ENCODE measurements at regions of chr10 and their contacts with region 1.

Region 1: GRCh38 chr10:51368939-51369338 is 294.7 kb downstream of the PRKG1 start:
- DNase-seq: no peak
- ATAC-seq: no peak
- H3K4me3 ChIP-seq: no peak overlapping the region
- H3K27ac ChIP-seq: no peak overlapping the region
- H3K4me1 ChIP-seq: peaks cover 0 to 43% (median 11%) of the 10 kb centered on the region in 12 donors
- H3K27me3 ChIP-seq: no peaks in the 10 kb centered on the region
- CTCF ChIP-seq: peak in 1 of 12 donors; percentile 7
- POLR2A ChIP-seq: no peak

Region 2: DNA sequence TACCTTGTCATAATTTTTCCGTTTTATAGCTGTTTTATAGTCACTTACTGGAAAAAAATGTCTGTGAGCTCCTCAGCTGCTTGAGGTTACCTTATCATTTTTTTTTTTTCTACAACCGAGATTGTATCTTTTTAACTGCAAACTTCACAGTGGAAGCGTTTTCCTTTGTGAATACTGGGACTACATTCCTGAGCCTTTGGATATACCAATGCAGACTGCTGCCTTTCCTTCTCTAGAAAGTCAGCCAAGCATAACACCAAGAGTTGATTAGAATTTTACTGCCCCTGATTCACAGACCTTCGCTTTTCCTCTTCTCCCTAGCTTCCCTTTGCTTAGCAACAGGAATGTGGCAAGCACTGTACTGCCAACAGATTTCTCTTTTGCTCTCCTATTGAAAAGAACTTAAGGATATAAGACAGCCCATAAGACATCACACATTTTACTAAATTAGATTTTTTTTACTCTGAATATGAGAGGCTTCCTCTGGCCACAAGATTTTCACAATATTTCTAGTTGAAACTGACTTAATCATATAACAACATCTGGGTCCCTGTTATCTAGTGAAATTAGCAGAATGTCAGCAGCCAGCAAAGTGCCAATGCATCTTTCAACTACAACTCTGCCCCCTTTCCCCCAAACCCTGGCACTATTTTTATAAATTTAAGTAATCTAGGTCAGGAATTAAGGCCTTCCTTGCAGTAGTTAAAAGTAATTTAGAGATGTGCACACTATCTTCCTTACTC is 124.0 kb before region 1 on chr10:
- intact Hi-C with region 1: loop called in 1 of 10 experiments (anchors 10 kb)
- DNase-seq: no peak
- ATAC-seq: peak; percentile 55 to 87 (median 84)
- H3K4me3 ChIP-seq: peak overlapping the region in 6 of 12 donors; percentile 1 to 25 (median 10)
- H3K27ac ChIP-seq: peak overlapping the region; percentile 7 to 79 (median 54)
- H3K4me1 ChIP-seq: peaks cover 0 to 59% (median 16%) of the 10 kb centered on the region in 12 donors
- H3K27me3 ChIP-seq: no peaks in the 10 kb centered on the region
- CTCF ChIP-seq: no peak
- POLR2A ChIP-seq: no peak

Region 3: GRCh38 chr10:51405580-51406351 is 36.8 kb after region 1 on chr10:
- intact Hi-C with region 1: no loop called
- DNase-seq: no peak
- ATAC-seq: peak; percentile 45 to 84 (median 62)
- H3K4me3 ChIP-seq: no peak overlapping the region
- H3K27ac ChIP-seq: peak overlapping the region in 11 of 12 donors; percentile 13 to 60 (median 38)
- H3K4me1 ChIP-seq: peaks cover 0 to 41% (median 26%) of the 10 kb centered on the region in 12 donors
- H3K27me3 ChIP-seq: no peaks in the 10 kb centered on the region
- CTCF ChIP-seq: no peak
- POLR2A ChIP-seq: no peak

Region 4: DNA sequence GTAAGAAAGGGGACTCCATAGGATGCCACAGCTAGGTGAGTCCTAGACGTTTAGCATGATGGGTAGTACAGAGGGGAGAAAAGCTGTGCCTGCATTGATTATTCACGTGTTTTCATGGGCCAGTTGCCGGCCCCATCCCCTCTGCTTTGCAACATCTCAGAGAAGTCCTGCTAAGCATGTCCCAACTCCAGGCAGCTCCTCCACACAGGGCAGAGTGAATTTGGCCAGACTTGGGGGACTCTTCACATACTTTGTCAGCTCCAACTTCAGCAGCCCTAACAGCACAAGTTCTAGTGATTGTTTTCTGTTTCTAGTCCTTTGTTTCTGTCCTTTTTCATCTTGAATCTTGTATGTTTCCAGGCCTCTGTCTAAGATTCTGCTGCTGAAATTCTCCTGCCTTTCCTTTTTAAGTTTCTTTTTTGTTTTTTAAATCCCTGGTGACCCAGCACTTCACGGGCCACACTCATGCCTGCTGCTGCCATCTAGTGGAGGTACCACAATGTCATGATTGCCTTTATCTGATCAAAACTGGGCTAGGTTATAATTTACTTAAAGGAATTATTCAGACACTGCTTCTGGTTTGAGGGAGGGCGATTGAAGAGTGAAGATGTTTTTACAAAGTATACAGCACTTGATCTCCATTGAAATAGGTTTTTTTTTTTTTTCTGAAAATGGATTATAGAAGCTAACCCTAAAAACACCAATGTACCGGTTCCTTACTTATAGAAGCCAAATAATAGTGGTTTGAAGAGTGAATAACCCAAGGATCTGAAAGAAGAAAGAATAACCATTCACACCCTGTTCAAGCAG is 53.6 kb after region 1 on chr10:
- intact Hi-C with region 1: no loop called
- DNase-seq: peak; percentile 52 to 61 (median 57)
- ATAC-seq: peak; percentile 47 to 72 (median 60)
- H3K4me3 ChIP-seq: no peak overlapping the region
- H3K27ac ChIP-seq: peak overlapping the region; percentile 52 to 80 (median 72)
- H3K4me1 ChIP-seq: peaks cover 0 to 48% (median 10%) of the 10 kb centered on the region in 12 donors
- H3K27me3 ChIP-seq: no peaks in the 10 kb centered on the region
- CTCF ChIP-seq: peak; percentile 39 to 84 (median 70)
- POLR2A ChIP-seq: no peak

Measured in heart left ventricle (tissue), 16 donors.